Spleen (tissue), 13 donors: ENCODE measurements at regions of chr2 and their contacts with region 1.

Region 1: DNA sequence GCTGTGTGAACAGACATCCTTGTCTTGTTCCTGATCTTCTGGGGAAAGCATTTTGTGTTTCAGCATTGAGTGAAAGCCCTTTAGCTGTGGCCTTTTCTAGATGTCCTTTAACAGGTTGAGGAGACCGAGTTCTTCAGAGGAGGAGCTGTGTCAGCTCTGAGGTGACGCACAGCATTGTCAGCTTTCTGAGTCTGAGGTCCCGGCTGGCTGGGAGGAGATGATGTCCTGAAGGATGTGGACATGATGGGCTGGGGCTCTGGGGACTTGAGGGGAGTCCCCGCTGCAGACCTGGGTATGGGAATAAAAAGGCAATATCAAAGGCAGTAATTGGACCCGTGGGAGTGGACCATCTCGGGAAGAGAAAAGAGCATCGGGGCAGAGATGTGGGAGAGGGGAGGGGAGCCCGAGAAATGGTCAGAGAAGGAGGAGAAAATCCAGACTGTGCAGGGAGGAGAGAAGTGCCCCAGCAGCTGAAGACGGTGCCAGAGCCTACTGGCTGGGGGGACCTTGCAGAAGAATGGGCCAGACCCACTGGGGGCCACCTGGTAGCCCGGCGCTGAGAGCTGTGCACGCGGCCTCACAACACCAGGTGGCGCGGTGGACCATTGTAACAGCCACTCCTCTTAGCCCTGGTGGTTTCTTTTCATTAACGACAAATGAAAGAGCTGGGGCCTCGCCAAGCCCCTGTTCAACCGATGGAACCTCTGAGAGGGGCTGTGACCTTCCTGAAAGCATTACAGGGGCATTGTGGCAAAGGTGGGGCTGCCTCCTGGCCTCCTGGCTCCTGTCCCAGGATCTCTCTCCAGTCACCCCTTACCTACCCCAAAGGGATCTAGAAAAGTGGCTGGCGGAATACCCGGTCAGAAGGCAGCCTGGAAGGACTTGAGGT is 61.6 kb downstream of the ST3GAL5 start:
- DNase-seq: peak; percentile 93
- H3K4me3 ChIP-seq: peak overlapping the region in 1 of 8 donors; percentile 34
- H3K27ac ChIP-seq: peak overlapping the region in 1 of 8 donors; percentile 24
- H3K4me1 ChIP-seq: peaks cover 0 to 18% (median 8%) of the 10 kb centered on the region in 6 donors
- H3K27me3 ChIP-seq: peaks cover 0 to 5% (median 0%) of the 10 kb centered on the region in 7 donors
- CTCF ChIP-seq: peak; percentile 85 to 96 (median 93)
- POLR2A ChIP-seq: no peak

Region 2: DNA sequence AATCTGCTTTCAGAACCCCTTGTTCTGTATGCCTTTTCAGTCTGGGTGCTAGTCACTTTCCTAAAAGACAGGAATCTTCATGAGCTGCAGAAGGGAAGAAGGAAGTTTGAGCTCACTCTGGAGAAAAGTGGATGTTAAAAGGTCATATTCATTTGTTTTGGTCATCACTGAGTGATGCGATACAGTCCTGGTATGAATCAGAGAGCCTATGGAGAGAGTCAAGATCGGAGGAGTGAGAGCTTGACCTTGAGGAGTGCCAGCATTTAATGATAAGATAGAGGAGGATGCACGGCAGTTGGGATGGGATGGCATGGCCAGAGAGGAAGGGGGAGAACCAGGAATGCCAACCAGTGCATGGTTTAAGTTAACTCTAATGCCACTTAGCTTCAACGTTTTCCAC is 191.6 kb before region 1 on chr2:
- intact Hi-C with region 1: no loop called
- DNase-seq: no peak
- H3K4me3 ChIP-seq: no peak overlapping the region
- H3K27ac ChIP-seq: no peak overlapping the region
- H3K4me1 ChIP-seq: peaks cover 0 to 7% (median 0%) of the 10 kb centered on the region in 6 donors
- H3K27me3 ChIP-seq: no peaks in the 10 kb centered on the region
- CTCF ChIP-seq: no peak
- POLR2A ChIP-seq: no peak

Region 3: DNA sequence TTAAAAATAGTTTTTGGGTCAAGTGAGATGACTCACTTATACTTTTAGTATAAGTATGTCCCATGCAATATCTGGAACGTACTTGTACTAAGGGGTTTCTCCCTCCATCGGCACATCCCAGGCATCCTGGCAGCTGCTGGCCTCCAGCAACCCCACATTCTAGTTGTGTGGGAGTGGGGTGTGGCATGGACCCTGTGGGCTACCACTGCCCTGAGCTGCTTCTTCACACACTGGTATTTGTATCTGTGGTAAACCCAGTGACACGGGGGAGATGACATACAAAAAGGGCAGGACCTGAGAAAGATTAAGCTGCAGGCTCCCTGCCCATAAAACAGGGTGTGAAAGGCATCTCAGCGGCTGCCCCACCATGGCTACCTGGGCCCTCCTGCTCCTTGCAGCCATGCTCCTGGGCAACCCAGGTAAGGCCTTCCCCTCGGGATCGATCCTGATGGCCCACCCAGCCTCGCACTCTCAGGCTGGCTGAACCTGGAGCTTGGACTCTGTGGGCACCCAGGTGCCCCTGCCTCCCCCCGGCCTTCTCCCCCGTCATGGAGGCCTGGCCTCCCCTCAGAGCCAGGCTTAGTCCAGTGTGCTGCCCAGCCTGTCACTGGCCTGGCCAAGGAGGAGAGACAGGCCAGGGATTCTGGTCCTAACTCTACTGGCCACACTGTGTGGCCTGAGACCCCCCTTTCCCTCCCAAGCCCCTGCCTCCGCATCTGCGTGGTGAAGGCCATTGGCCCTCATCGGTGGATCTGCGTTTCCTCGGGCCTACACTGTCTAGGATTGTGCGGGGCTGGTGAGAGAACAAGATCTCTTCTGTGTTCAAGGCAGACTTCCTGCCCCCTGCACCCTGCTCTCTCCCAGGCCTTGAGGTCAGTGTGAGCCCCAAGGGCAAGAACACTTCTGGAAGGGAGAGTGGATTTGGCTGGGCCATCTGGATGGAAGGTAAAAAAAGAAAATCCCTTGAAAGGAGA is 132.9 kb before region 1 on chr2 and contains the start of gene GNLY:
- intact Hi-C with region 1: no loop called
- DNase-seq: no peak
- H3K4me3 ChIP-seq: peak within 1 kb of the TSS in 2 of 8 donors; percentile 12 to 50
- H3K27ac ChIP-seq: peak within 1 kb of the TSS in 4 of 8 donors; percentile 7 to 81 (median 68)
- H3K4me1 ChIP-seq: peaks cover 0 to 25% (median 0%) of the 10 kb centered on the region in 6 donors
- H3K27me3 ChIP-seq: no peaks in the 10 kb centered on the region
- CTCF ChIP-seq: no peak
- POLR2A ChIP-seq: no peak
- total RNA-seq, gene GNLY: 17.4 to 87.8 (median 42.6) TPM

Region 4: DNA sequence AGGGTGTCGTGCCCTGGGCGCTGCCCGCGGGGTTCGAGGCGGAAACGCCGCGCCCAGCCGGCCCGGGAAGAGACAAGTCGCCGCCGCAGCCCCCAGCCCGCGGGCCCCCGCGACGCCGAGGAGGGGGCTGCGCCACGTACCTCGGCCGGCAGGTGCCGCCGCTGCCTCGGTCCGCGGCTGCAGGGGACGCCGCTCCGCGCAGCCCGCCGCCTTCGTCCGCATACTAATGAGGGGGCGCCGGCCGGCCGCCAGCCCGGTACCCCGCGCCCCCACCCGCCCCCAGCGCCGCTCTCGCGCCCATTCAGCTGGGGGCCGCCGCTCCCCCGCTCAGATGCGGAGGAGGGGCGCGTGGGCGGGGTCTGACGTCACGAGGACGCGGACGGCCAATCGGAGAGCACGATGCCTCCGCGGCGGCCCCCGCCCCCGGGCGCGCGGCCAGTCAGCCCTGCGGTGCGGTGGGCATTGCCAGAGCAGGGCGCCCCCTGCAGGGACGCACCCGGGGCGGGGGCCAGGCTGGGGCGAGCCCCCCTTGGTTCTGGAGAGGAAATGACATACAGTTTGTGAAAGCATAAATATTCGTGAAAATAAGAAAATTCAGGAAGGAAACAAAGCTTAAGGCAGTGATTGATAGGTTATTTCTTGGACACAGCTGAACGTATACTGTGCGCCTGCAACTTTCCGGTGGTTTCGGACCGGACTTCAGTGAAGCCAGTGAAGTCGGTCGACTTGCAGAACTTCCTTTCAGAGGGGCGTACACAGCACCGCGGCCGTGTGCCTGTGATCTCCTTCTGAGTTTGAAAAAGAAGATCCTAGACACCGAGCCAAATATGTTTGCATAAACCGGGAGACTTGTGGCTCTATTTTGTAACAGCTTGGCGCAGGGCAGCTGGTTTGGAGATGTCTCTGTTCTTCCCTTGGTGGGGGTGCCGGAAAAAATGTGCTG is 61.7 kb after region 1 on chr2 and contains the start of gene ST3GAL5:
- intact Hi-C with region 1: loop called (anchors 5 kb)
- DNase-seq: peak; percentile 97
- H3K4me3 ChIP-seq: peak within 1 kb of the TSS; percentile 65 to 95 (median 86)
- H3K27ac ChIP-seq: peak within 1 kb of the TSS; percentile 88 to 96 (median 91)
- H3K4me1 ChIP-seq: peaks cover 37 to 93% (median 82%) of the 10 kb centered on the region in 6 donors
- H3K27me3 ChIP-seq: peaks cover 0 to 8% (median 0%) of the 10 kb centered on the region in 7 donors
- CTCF ChIP-seq: peak; percentile 59 to 91 (median 82)
- POLR2A ChIP-seq: peak in 2 of 3 donors; percentile 8 to 82
- total RNA-seq, gene ST3GAL5: 55.8 to 124 (median 74.9) TPM